ENCODE measurements at regions of chr1 and their contacts with region 1.

Region 1: DNA sequence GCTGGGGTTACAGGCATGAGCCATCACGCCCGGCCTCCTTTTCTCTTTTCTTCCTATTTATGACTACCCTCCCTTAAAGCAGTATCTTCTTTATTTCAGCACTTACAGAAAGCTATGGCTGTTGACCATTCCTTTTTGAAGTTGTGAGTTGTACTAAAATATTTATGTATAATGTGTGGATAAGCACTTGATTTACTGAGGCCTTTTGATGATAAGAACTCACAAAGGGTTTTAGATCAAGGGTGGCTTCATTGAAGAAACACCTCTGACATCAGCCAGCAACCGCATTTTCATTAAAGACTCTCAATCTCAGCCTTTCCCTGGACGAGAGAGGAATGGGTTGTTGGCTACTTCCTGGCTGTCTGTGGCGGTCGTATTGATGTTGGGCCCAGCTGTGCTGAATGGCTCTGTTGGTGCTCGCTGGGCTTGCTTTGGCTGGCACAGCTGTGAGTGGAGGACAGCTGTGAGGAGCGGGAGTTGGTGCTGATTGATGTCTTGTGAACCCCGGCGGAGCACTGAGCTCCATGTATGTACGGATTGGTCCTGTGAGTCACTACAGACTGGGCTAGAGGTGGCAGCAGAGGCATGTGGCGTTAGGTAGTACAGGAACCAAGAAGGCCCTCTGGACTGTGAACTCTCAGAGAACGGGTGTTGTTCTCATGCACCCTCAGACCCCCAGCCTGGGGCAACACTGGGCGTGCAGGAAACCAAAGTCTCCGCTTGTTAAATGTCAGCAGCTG is 208.8 kb downstream of the KIF26B start:
- DNase-seq: no peak
- ATAC-seq: no peak
- H3K4me3 ChIP-seq: no peak overlapping the region
- H3K27ac ChIP-seq: no peak overlapping the region
- H3K4me1 ChIP-seq: no peaks in the 10 kb centered on the region
- H3K27me3 ChIP-seq: no peaks in the 10 kb centered on the region
- CTCF ChIP-seq: no peak

Region 2: DNA sequence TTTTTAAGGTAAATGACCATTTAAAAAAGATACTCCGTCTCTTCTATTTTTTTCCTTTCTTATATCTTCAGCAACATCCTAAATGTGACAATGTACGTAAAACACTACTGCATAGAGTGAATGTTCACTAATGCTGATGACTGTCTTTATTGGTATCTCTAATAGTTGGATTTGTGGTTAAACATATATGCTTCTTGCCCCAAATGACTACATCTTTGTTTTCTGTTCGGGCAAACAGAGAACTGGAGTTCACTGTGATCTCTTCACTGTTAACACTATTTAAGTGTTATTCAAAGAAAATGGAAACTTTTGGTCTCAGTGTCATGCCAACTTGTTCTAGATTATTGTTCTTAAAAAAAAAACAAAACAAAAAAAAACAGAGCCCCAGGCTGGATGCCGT is 99.4 kb before region 1 on chr1:
- CTCF ChIA-PET with region 1: no interaction called
- POLR2A ChIA-PET with region 1: no interaction called
- in situ Hi-C with region 1: no loop called
- intact Hi-C with region 1: no loop called
- DNase-seq: no peak
- ATAC-seq: no peak
- H3K4me3 ChIP-seq: no peak overlapping the region
- H3K27ac ChIP-seq: no peak overlapping the region
- H3K4me1 ChIP-seq: no peaks in the 10 kb centered on the region
- H3K27me3 ChIP-seq: peaks cover 8% of the 10 kb centered on the region
- CTCF ChIP-seq: no peak

Region 3: DNA sequence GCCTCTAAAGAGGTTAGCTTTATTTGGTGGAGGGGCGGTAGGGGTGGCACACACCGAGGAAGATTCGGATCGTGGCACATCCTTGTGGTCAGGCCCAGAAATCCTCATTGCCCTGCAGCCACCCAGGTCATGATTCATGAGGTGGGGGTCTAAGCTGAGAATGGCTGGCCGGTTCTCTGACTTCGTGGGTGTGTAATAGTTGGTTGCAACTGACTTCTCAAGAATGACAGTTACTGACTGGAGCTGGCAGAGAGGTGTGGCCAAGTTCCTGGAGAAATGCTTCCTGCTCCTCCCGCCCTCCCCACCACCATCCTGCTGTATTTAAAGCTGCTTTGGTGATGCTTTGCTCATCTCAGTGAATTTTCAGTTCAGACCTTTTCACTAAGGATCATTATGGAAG is 10.2 kb before region 1 on chr1:
- CTCF ChIA-PET with region 1: no interaction called
- POLR2A ChIA-PET with region 1: no interaction called
- in situ Hi-C with region 1: no loop called
- intact Hi-C with region 1: no loop called
- DNase-seq: no peak
- ATAC-seq: no peak
- H3K4me3 ChIP-seq: no peak overlapping the region
- H3K27ac ChIP-seq: no peak overlapping the region
- H3K4me1 ChIP-seq: no peaks in the 10 kb centered on the region
- H3K27me3 ChIP-seq: peaks cover 9% of the 10 kb centered on the region
- CTCF ChIP-seq: no peak

Region 4: DNA sequence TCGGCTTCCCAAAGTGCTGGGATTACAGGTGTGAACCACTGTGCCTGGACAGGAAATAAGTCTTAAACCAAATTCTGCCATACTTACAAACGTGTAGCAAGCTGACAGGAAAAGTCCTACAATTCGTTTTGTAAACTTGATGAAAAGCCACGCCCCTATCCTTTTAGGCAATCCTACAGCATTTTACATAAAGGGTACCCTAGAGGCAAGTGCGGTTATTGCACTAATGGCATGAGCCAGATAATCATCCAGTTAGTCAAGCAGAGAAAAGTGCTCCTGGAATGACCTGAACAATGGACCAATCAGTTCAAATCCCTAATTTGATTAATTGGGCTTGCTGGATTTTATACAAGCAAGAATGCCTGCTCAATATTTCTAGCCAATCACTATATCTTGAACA is 129.4 kb after region 1 on chr1:
- CTCF ChIA-PET with region 1: no interaction called
- POLR2A ChIA-PET with region 1: no interaction called
- in situ Hi-C with region 1: no loop called
- intact Hi-C with region 1: no loop called
- DNase-seq: no peak
- ATAC-seq: no peak
- H3K4me3 ChIP-seq: no peak overlapping the region
- H3K27ac ChIP-seq: no peak overlapping the region
- H3K4me1 ChIP-seq: no peaks in the 10 kb centered on the region
- H3K27me3 ChIP-seq: no peaks in the 10 kb centered on the region
- CTCF ChIP-seq: no peak

Region 5: GRCh38 chr1:246459221-246459620 is 1095.6 kb after region 1 on chr1:
- CTCF ChIA-PET with region 1: interaction called, 12 read pairs
- POLR2A ChIA-PET with region 1: no interaction called
- in situ Hi-C with region 1: no loop called
- intact Hi-C with region 1: no loop called
- DNase-seq: no peak
- ATAC-seq: no peak
- H3K4me3 ChIP-seq: no peak overlapping the region
- H3K27ac ChIP-seq: no peak overlapping the region
- H3K4me1 ChIP-seq: no peaks in the 10 kb centered on the region
- H3K27me3 ChIP-seq: no peaks in the 10 kb centered on the region
- CTCF ChIP-seq: no peak

Measured in Panc1 (cell line).